ENCODE measurements at regions of chrX and their contacts with region 1.

Region 1: DNA sequence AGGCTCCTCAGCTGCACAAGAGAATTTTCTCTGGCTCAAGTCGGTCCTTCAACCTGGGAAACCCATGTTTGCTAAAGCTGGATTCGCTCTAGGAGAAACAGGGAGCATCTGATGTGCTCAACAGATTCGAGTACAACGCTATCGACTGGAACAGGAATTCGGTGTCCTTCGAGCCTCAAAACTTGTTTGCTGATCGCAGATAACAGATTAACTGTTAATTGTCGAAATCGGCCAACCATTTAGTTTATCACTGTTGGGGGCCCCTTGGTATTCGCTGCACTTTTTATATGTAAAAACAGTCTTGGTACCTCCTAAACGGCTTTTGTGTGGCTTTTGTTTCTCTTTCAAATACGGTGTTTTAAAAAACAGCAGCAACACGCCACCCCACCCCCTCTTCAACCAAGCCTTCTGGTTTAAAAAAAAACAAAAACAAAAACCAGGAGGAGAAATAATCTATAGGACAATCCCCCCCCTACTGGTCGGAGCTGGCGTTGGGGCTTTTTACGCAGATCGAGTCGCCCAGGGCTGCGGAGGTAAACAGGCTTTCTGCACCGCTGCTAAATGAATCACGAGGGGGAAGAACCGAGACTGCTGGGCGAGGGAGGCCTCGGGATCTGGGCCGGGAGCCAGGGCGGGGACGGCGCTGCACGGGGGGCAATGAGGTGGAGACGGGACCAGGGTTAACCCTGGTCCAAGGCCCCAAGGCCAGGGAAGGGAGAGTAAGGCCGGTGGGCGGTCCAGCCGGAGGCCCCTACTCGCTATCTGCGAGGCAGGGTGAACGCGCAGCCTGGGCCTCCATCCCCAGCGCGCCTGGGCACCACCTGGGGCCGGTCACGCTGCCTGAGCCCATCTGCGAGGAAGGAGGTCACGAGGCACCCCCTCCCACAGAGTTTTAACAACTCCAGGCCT is 71.7 kb upstream of the BCOR start:
- DNase-seq: peak; percentile 58 to 87 (median 70)
- ATAC-seq: peak; percentile 60
- H3K4me3 ChIP-seq: no peak overlapping the region
- H3K27ac ChIP-seq: peak overlapping the region; percentile 74
- H3K4me1 ChIP-seq: peaks cover 45 to 70% of the 10 kb centered on the region in 2 experiments
- H3K27me3 ChIP-seq: no peaks in the 10 kb centered on the region
- CTCF ChIP-seq: peak; percentile 64 to 77 (median 75)
- EP300 ChIP-seq: peak; percentile 43
- POLR2A ChIP-seq: no peak
- RAD21 ChIP-seq: peak; percentile 55 to 57

Region 2: GRCh38 chrX:40013266-40014195 is 155.9 kb before region 1 on chrX:
- CTCF ChIA-PET with region 1: no interaction called
- POLR2A ChIA-PET with region 1: interaction called, 3 read pairs
- in situ Hi-C with region 1: no loop called
- intact Hi-C with region 1: loop called (anchors 10 kb)
- DNase-seq: peak; percentile 66 to 81 (median 75)
- ATAC-seq: peak; percentile 77
- H3K4me3 ChIP-seq: peak overlapping the region; percentile 59
- H3K27ac ChIP-seq: peak overlapping the region; percentile 92
- H3K4me1 ChIP-seq: peaks cover 0 to 38% of the 10 kb centered on the region in 2 experiments; a peak in 3 of 5 replicates
- H3K27me3 ChIP-seq: no peaks in the 10 kb centered on the region
- CTCF ChIP-seq: peak in 1 of 3 experiments; percentile 13; a peak in 1 of 6 replicates
- EP300 ChIP-seq: no peak
- POLR2A ChIP-seq: peak; percentile 66
- RAD21 ChIP-seq: peak in 1 of 2 experiments; percentile 30; a peak in 1 of 4 replicates

Region 3: GRCh38 chrX:40108959-40109287 is 60.5 kb before region 1 on chrX:
- CTCF ChIA-PET with region 1: no interaction called
- POLR2A ChIA-PET with region 1: interaction called, 8 read pairs
- in situ Hi-C with region 1: loop called (anchors 5 kb)
- intact Hi-C with region 1: loop called (anchors 2 kb)
- DNase-seq: peak; percentile 64 to 85 (median 74)
- ATAC-seq: peak; percentile 64
- H3K4me3 ChIP-seq: peak overlapping the region; percentile 66
- H3K27ac ChIP-seq: peak overlapping the region; percentile 95
- H3K4me1 ChIP-seq: peaks cover 44 to 65% of the 10 kb centered on the region in 2 experiments
- H3K27me3 ChIP-seq: no peaks in the 10 kb centered on the region
- CTCF ChIP-seq: no peak
- EP300 ChIP-seq: no peak
- POLR2A ChIP-seq: no peak
- RAD21 ChIP-seq: 0 out of 4 replicates have a peak, but pooled peaks of 1 of the 2 experiments have one; percentile 12

Region 4: GRCh38 chrX:40266490-40267333 is 97.3 kb after region 1 on chrX:
- CTCF ChIA-PET with region 1: interaction called, 3 read pairs
- POLR2A ChIA-PET with region 1: no interaction called
- in situ Hi-C with region 1: loop called (anchors 5 kb)
- intact Hi-C with region 1: loop called (anchors 2 kb)
- DNase-seq: peak; percentile 68 to 77 (median 72)
- ATAC-seq: peak; percentile 92
- H3K4me3 ChIP-seq: peak overlapping the region; percentile 34
- H3K27ac ChIP-seq: peak overlapping the region; percentile 57; the same call in 2 of the 3 replicates
- H3K4me1 ChIP-seq: peaks cover 17 to 32% of the 10 kb centered on the region in 2 experiments; a peak in 4 of 5 replicates
- H3K27me3 ChIP-seq: no peaks in the 10 kb centered on the region
- CTCF ChIP-seq: peak; percentile 75 to 82 (median 75)
- EP300 ChIP-seq: peak; percentile 48; the same call in 1 of the 2 replicates
- POLR2A ChIP-seq: no peak
- RAD21 ChIP-seq: peak; percentile 82 to 84

Region 5: DNA sequence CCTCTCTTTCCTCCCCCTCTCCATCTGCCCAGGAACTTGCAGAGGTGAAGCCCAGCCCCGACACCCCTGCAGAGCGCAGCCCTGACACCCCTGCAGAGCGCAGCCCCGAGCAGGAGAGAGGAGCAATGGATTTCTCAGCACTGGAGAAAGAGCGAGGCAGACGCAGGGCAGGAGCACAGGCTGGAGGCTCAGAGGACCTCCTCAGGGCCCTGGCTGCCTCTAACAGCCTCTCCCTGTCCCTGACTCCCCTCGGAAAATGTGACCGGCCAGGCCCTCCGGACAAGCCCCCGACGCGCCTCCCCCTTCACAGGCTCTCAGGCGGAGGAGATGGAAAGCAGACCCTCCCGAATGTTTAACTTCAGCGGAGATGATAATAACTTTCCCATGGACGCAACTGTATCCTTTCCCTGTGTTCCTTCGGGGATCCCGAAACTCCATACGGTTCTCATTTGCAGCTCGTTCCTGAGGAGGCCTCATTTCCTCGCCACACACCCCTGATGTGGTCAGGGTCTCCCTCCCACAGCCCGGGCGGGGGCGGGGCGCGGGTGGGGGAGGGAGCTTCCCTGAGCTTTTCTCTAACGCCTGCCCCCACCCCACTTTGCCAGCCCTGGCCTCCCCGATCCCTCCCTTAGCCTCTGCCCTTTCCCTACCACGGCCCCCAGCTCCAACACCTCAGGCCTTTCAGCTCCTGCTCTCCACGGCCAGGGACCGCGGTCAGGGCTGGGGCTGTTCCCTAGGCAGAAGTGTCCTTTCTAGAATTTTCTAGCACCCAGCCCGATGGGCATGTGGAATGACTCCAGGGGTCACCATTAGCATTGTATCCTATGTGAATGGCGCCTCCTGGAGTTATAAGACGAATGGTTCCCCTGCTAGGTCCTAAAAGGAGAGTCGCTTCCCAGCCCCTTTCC is 129.4 kb after region 1 on chrX:
- CTCF ChIA-PET with region 1: no interaction called
- POLR2A ChIA-PET with region 1: no interaction called
- in situ Hi-C with region 1: no loop called
- intact Hi-C with region 1: no loop called
- DNase-seq: peak in 2 of 4 experiments; percentile 23 to 29
- ATAC-seq: peak; percentile 67
- H3K4me3 ChIP-seq: no peak overlapping the region
- H3K27ac ChIP-seq: no peak overlapping the region
- H3K4me1 ChIP-seq: peaks cover 7 to 10% of the 10 kb centered on the region in 2 experiments; a peak in 3 of 5 replicates
- H3K27me3 ChIP-seq: no peaks in the 10 kb centered on the region; a peak in 2 of 5 replicates
- CTCF ChIP-seq: peak; percentile 40 to 47 (median 42); a peak in 5 of 6 replicates
- EP300 ChIP-seq: no peak
- POLR2A ChIP-seq: no peak
- RAD21 ChIP-seq: peak; percentile 8 to 57; a peak in 2 of 4 replicates